Tibial artery (tissue), 4 donors: ENCODE measurements at regions of chr2 and their contacts with region 1.

Region 1: DNA sequence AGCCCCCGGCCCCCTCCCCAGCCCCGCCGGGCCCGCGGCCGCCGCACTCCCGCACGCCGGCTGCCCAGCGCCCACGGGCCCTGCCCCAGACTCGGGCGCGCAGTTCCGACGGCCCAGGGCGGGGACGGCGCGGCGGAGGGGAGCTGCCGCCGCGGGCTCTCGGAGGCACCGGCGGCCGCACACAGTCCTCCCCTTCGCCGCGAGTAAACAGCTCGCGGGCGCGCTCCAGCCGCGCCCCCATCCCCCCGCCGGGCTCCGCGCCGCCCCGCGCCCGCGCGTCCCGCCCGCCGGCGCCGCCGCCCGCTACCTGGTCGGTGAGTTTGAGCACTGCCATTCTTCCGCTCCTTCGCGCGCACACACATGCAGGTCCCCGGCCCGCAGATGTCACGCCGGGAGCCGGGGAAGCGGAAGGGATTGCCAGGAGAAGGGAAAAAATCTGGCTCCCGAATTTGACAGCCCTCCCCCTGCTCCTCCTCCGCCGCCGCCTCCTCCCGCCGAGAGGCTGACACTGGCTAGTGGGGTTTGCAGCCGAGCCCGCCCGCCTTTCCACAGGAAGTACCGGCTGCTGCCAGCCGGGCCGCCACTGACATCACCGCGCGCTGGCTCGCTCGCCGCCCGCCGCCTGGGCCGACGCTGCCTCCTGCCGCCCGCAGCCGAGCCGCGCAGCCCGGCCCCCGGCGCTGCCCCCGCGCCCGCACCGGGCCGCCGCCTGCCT is at the start of gene ANKRD44:
- DNase-seq: peak; percentile 94 to 96
- H3K4me3 ChIP-seq: peak within 1 kb of the TSS; percentile 80 to 83
- H3K27ac ChIP-seq: peak within 1 kb of the TSS; percentile 79 to 86
- H3K4me1 ChIP-seq: peaks cover 0 to 49% (median 25%) of the 10 kb centered on the region in 4 donors
- H3K27me3 ChIP-seq: no peaks in the 10 kb centered on the region
- CTCF ChIP-seq: peak; percentile 47 to 94

Region 2: GRCh38 chr2:197011799-197012641 is 298.4 kb before region 1 on chr2:
- intact Hi-C with region 1: loop called (anchors 5 kb)
- DNase-seq: no peak
- H3K4me3 ChIP-seq: no peak overlapping the region
- H3K27ac ChIP-seq: no peak overlapping the region
- H3K4me1 ChIP-seq: no peaks in the 10 kb centered on the region
- H3K27me3 ChIP-seq: no peaks in the 10 kb centered on the region
- CTCF ChIP-seq: peak; percentile 67 to 71

Region 3: GRCh38 chr2:197191177-197191939 is 119.1 kb before region 1 on chr2:
- intact Hi-C with region 1: loop called (anchors 2 kb)
- DNase-seq: no peak
- H3K4me3 ChIP-seq: no peak overlapping the region
- H3K27ac ChIP-seq: no peak overlapping the region
- H3K4me1 ChIP-seq: peaks cover 0 to 28% (median 10%) of the 10 kb centered on the region in 4 donors
- H3K27me3 ChIP-seq: no peaks in the 10 kb centered on the region
- CTCF ChIP-seq: peak; percentile 65 to 74